Ascending aorta (tissue), 2 donors: ENCODE measurements at regions of chr2 and their contacts with region 1.

Region 1: GRCh38 chr2:237322564-237322963 is 91.4 kb downstream of the COL6A3 start:
- DNase-seq: no peak
- H3K4me3 ChIP-seq: no peak overlapping the region
- H3K27ac ChIP-seq: peak overlapping the region; percentile 85 to 91
- H3K4me1 ChIP-seq: peaks cover 8 to 42% of the 10 kb centered on the region in 2 donors
- H3K27me3 ChIP-seq: no peaks in the 10 kb centered on the region
- CTCF ChIP-seq: peak in 1 of 3 experiments; percentile 10

Region 2: DNA sequence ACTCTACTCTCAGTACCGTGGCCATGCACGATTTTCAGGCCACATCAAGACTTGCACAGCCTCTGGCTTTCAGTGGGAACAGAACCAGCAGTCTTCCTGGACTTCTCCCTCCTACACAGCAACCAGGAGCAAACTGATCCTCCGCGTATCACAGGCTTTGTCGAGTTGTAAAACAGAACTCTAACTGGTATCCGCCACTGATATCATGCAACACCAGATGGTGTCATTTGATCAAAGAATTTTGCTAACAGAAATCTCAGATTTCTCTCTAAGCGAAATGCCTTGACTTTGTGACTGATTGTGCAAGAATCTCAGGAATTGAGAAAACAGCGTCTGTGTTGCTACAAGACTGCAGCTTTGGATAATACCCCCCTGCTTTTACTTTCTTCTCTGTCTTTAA is 151.2 kb before region 1 on chr2:
- intact Hi-C with region 1: loop called (anchors 5 kb)
- DNase-seq: no peak
- H3K4me3 ChIP-seq: peak overlapping the region in 1 of 2 donors; percentile 31
- H3K27ac ChIP-seq: peak overlapping the region; percentile 32 to 67
- H3K4me1 ChIP-seq: peaks cover 0 to 6% of the 10 kb centered on the region in 2 donors
- H3K27me3 ChIP-seq: no peaks in the 10 kb centered on the region
- CTCF ChIP-seq: peak in 2 of 3 experiments; percentile 39 to 44

Region 3: GRCh38 chr2:237280229-237280628 is 42.3 kb before region 1 on chr2:
- intact Hi-C with region 1: loop called (anchors 5 kb)
- DNase-seq: no peak
- H3K4me3 ChIP-seq: no peak overlapping the region
- H3K27ac ChIP-seq: peak overlapping the region in 1 of 2 donors; percentile 13
- H3K4me1 ChIP-seq: peaks cover 0 to 11% of the 10 kb centered on the region in 2 donors
- H3K27me3 ChIP-seq: no peaks in the 10 kb centered on the region
- CTCF ChIP-seq: no peak

Region 4: GRCh38 chr2:237304763-237305514 is 17.6 kb before region 1 on chr2:
- intact Hi-C with region 1: no loop called
- DNase-seq: no peak
- H3K4me3 ChIP-seq: no peak overlapping the region
- H3K27ac ChIP-seq: no peak overlapping the region
- H3K4me1 ChIP-seq: peaks cover 0 to 23% of the 10 kb centered on the region in 2 donors
- H3K27me3 ChIP-seq: no peaks in the 10 kb centered on the region
- CTCF ChIP-seq: no peak

Region 5: GRCh38 chr2:237806334-237806733 is 483.8 kb after region 1 on chr2:
- intact Hi-C with region 1: no loop called
- DNase-seq: no peak
- H3K4me3 ChIP-seq: no peak overlapping the region
- H3K27ac ChIP-seq: no peak overlapping the region
- H3K4me1 ChIP-seq: no peaks in the 10 kb centered on the region
- H3K27me3 ChIP-seq: no peaks in the 10 kb centered on the region
- CTCF ChIP-seq: no peak